ENCODE measurements at regions of chr1 and their contacts with region 1.

Region 1: GRCh38 chr1:155250633-155251449 is 4.4 kb downstream of the ENTREP3 start:
- DNase-seq: no peak
- H3K4me3 ChIP-seq: no peak overlapping the region
- CTCF ChIP-seq: peak; percentile 100

Region 2: DNA sequence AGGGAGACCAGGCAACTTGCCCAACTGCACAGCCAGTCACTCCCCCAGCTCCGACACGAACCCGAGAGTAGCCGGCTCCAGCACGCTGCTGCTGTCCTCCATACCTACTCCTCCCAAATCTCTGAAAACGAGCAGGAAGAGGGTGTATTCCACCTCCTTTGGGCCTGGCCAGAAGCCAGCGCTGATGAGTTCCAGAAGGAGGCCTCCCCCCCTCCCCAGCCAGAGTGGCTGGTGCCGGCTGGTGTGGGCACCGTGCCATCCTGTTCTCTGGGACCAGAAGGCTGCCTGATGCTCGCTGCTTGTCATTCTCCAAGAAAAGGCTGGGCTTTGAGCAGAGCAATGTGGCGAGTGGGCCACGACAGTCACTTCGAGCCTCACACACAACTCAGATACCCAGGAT is 402.9 kb before region 1 on chr1:
- CTCF ChIA-PET with region 1: no interaction called
- POLR2A ChIA-PET with region 1: no interaction called
- DNase-seq: no peak
- H3K4me3 ChIP-seq: no peak overlapping the region
- CTCF ChIP-seq: no peak

Region 3: DNA sequence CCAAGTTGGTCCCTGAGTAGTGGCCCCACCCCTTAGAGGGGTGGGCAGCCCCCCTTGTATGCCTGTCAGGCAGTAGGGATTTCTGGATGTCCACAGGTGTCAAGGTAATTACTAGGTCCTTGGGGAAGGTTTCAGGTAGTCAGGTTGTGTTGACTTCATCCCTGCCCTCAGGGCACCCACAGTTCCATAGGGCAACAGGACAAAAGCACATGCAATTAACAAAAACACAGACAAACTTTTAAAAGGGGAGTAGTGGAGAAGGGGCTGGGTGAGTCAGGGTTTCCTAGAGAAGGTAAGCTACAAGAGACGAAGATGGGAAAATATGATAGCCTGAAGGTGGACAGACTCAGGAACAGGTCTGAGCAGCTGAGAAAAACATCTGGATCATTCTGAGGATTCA is 91.9 kb before region 1 on chr1:
- CTCF ChIA-PET with region 1: no interaction called
- POLR2A ChIA-PET with region 1: no interaction called
- DNase-seq: no peak
- H3K4me3 ChIP-seq: no peak overlapping the region
- CTCF ChIP-seq: no peak

Region 4: DNA sequence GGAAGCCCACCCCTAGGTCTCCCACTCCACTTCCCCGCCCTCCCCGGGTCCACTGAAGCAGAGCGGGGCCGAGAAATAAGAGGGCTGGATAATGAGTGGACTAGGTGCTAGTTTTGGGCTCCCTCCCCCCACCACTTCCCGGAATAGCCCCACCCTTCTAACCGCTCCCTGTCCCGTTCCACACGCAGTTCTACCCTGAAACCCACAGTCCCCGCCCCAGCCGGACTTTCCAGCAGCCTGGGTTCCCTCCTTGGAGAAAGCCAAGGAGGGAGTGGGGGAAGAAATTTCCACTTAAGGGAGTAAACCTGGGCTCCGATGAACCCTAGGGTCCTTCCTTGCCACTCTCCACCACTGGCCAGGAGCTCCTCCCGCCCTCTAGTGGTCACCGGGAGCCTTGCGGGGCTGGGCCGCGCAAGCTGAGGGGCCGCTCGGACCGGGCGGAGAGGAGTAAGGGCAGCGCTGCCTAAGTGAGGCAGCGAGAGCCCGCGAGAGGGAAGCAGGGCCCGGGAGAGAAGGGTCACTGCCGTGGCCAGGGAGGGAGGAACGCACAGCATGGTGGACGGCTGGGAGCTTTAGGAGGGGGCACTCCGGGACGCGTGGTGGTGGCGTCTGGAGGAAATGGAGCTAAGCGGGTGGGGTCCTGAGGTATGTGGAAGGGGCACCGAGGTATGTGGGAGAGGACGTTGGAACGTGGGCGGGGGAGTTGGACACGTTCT is 57.4 kb before region 1 on chr1:
- CTCF ChIA-PET with region 1: interaction called, 17 read pairs
- POLR2A ChIA-PET with region 1: no interaction called
- DNase-seq: no peak
- H3K4me3 ChIP-seq: peak overlapping the region; percentile 66
- CTCF ChIP-seq: peak; percentile 99

Region 5: DNA sequence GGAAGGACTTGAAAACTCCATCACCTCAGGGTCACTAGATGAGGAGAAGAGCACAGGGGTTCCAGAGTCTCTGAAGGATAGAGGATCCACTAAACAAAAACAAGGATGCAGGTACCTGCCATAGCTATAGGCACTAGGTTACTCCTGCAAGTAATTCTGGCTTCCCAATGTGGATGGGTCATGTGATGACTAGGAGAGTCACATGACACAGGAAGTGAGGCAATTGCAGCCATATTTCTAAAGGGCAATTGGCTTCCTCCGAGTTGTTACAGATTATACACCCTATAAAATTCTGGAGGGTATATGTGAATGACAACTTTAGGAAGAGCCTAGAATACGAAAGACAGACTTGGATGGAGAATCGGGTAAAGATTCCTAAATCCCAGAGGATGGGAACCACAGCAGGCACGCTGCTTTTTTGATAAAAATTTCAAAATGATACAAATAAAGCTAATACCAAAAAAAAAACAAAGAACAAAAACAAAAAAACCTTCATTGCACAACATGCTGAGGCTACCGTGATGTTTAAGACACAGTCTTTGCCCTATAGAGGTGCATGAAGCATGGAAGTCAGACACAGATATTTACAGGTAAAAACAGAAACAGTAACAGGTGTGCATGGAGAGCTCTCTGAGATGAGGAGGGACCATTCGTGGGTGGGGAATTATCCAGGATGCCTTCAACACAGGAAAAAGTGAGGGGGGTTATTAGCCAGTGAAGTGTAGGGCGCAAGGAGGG is 31.8 kb before region 1 on chr1:
- CTCF ChIA-PET with region 1: interaction called, 21 read pairs
- POLR2A ChIA-PET with region 1: no interaction called
- DNase-seq: no peak
- H3K4me3 ChIP-seq: no peak overlapping the region
- CTCF ChIP-seq: no peak

Region 6: DNA sequence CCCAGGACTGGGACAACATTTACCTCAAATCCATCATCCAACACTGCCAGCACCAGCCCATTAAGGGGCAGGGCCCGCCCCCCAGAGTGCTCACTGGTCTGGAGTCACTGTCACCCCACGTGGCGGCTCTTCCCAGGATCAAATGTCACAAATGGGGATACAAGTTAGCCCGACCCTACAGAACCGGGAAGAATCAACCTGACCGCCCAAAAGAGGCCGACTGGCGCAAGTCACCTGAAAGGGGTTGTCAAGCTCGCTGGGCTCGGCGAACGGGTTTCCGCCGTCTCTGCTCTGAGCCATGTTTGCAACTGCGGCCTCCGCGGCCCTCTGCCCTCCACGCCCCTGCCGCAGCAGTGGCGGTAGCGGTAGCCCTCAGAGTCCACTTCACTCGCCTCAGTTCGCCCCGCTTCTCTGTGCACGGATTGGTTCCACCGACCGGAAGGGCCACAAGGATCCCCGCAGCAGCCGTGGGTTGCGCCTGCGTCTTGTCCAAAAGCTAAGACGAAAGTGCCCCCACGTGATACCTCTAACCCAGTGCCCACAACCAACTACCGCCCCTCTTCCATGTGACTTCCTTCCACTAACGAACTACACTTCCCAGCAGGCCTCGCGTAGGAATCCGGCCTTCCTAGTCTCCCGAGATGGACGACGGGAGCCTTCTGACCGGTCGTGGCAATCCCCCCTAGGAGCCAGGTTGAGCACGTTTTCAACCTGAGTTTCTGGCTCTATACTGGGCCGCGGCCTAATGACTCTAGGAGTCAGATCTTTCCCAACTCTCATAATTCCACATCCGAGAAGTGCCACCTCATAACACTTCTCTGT is 11.2 kb after region 1 on chr1 and contains the start of gene SCAMP3:
- CTCF ChIA-PET with region 1: interaction called, 97 read pairs
- POLR2A ChIA-PET with region 1: interaction called, 13 read pairs
- DNase-seq: peak; percentile 92
- H3K4me3 ChIP-seq: peak within 1 kb of the TSS; percentile 97
- CTCF ChIP-seq: no peak

Region 7: GRCh38 chr1:155293086-155293749 is 42.4 kb after region 1 on chr1:
- CTCF ChIA-PET with region 1: interaction called, 13 read pairs
- POLR2A ChIA-PET with region 1: no interaction called
- DNase-seq: no peak
- H3K4me3 ChIP-seq: no peak overlapping the region
- CTCF ChIP-seq: no peak

Region 8: GRCh38 chr1:155339515-155340097 is 88.8 kb after region 1 on chr1:
- CTCF ChIA-PET with region 1: interaction called, 14 read pairs
- POLR2A ChIA-PET with region 1: no interaction called
- DNase-seq: no peak
- H3K4me3 ChIP-seq: no peak overlapping the region
- CTCF ChIP-seq: no peak

Region 9: DNA sequence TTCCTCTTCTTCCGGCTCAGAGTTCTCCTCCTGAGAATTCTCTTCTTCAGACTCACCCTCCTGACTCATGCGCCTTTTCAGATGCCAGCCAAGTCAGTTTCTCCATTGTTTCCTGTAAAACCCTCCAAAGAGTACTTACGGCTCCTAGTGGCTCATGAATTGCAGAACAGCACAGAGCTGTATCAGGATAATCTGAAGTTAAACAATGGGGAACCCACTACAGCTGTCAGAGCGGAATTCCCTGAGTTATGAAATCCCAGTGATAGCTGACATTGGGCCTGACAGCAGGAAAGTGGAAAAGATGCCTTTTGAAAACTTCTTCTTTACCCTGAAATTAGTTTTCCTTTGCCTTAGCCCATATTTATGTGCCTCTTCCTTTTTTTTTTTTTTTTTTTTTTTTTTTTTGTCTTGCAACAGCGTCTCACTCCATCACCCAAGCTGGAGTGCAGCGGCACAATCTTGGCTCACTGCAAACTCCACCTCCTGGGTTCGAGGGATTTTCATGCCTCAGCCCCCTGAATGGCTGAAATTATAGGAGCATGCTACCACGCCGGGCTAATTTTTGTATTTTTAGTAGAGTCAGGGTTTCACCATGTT is 397.8 kb after region 1 on chr1:
- CTCF ChIA-PET with region 1: interaction called, 34 read pairs
- POLR2A ChIA-PET with region 1: no interaction called
- DNase-seq: peak; percentile 60
- H3K4me3 ChIP-seq: peak overlapping the region; percentile 53
- CTCF ChIP-seq: peak; percentile 58

Region 10: DNA sequence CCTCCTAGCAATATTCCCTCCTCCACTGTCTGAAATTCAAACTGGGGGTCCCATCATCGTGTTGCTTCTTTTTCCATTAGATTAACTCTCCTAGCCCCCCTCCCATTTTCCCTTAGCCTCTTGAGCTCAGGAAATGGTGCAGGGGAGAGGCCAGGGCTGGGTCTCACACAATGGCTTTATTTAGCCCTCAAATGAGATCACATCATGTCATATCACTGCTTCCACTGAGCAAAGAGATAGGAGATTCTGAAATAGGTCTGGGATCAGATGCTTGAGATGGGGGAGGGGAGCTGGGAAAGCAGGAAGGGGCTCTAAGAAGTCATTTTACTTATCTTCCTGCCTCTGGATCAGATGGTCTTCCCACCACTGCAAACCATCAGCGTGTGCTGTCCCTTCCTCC is 745.3 kb after region 1 on chr1:
- CTCF ChIA-PET with region 1: no interaction called
- POLR2A ChIA-PET with region 1: no interaction called
- DNase-seq: no peak
- H3K4me3 ChIP-seq: no peak overlapping the region
- CTCF ChIP-seq: no peak

Measured in AG04449 (cell line).